MCF 10A (cell line): ENCODE measurements at regions of chr5 and their contacts with region 1.

Region 1: DNA sequence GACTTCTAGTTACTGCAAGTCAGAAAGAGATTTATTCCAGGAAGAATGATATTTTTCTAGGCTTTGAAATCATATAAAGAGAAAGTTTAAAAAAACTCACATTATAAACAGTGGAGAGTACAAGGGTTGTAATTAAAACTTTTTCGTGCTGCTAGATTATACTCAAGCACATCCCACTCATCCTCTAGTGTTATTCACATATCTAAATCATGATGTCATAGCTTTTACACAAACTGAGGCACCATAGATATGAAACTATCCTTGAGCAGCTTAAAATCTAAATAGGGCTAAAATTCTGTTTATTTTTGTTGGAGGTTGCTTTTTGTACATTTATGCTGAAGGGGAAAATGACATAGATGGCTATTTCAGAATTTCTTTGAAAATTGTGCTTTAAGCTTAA is 30.0 kb downstream of the TENT2 start:
- DNase-seq: no peak
- H3K4me3 Mint-ChIP-seq: no peak overlapping the region
- H3K27ac Mint-ChIP-seq: no peak overlapping the region
- H3K4me1 Mint-ChIP-seq: peaks cover 7% of the 10 kb centered on the region
- H3K27me3 Mint-ChIP-seq: no peaks in the 10 kb centered on the region
- CTCF ChIP-seq: no peak

Region 2: GRCh38 chr5:79612667-79613198 is 29.5 kb before region 1 on chr5:
- CTCF ChIA-PET with region 1: no interaction called
- POLR2A ChIA-PET with region 1: interaction called, 11 read pairs
- intact Hi-C with region 1: no loop called
- DNase-seq: no peak
- H3K4me3 Mint-ChIP-seq: peak overlapping the region; percentile 94
- H3K27ac Mint-ChIP-seq: peak overlapping the region; percentile 99
- H3K4me1 Mint-ChIP-seq: peaks cover 16% of the 10 kb centered on the region
- H3K27me3 Mint-ChIP-seq: no peaks in the 10 kb centered on the region
- CTCF ChIP-seq: no peak

Region 3: GRCh38 chr5:79630444-79630843 is 11.8 kb before region 1 on chr5:
- CTCF ChIA-PET with region 1: no interaction called
- POLR2A ChIA-PET with region 1: no interaction called
- intact Hi-C with region 1: no loop called
- DNase-seq: no peak
- H3K4me3 Mint-ChIP-seq: no peak overlapping the region
- H3K27ac Mint-ChIP-seq: no peak overlapping the region
- H3K4me1 Mint-ChIP-seq: no peaks in the 10 kb centered on the region
- H3K27me3 Mint-ChIP-seq: no peaks in the 10 kb centered on the region
- CTCF ChIP-seq: no peak